Activated CD4-positive, alpha-beta T cell treated with anti-CD3 and anti-CD28 coated beads for 36 hours (primary cell): ENCODE measurements at regions of chr9 and their contacts with region 1.

Region 1: GRCh38 chr9:132249123-132249522 is 87.3 kb downstream of the NTNG2 start:
- DNase-seq: no peak
- ATAC-seq: no peak
- H3K4me3 Mint-ChIP-seq: no peak overlapping the region
- H3K27ac Mint-ChIP-seq: no peak overlapping the region
- H3K4me1 Mint-ChIP-seq: peaks cover 2% of the 10 kb centered on the region
- H3K27me3 Mint-ChIP-seq: peaks cover 2% of the 10 kb centered on the region

Region 2: DNA sequence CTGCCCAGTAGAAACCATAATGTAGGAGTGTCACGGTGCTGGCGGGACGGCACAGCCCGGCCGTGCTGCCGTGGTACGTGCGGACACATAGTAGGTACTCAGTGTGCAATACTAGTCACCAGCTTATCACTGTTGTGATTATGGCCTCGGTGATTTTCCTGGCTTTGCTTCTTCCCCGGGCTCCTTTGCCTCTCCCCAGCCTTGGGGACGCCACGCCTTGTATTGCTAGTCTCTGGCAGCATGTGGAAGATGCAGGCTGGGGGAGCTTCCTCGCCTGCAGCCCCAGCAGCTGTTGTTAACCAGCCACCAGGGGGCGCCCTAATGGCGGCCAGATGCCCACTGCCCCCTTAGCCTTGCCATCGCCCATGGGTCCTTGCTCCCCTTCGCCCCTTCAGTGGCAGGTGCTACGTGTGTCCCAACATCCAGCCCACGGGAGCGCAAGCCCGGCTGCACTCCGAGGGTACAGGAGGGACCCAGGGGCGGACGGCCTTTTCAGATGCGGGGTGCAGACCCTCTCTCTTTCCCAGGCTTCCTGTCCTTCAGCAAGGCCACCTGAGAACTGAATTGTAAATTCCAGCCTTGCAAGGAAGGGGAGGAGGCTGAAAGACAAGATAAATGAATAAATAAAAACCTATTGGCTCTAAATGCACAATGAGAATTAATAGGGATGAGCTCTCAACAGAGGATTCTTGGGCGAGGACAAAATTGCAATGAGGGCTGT is 79.3 kb before region 1 on chr9:
- CTCF ChIA-PET with region 1: interaction called, 11 read pairs
- POLR2A ChIA-PET with region 1: no interaction called
- intact Hi-C with region 1: loop called (anchors 1 kb)
- DNase-seq: peak; percentile 79
- ATAC-seq: peak; percentile 58
- H3K4me3 Mint-ChIP-seq: no peak overlapping the region
- H3K27ac Mint-ChIP-seq: no peak overlapping the region
- H3K4me1 Mint-ChIP-seq: no peaks in the 10 kb centered on the region
- H3K27me3 Mint-ChIP-seq: peaks cover 33% of the 10 kb centered on the region

Region 3: DNA sequence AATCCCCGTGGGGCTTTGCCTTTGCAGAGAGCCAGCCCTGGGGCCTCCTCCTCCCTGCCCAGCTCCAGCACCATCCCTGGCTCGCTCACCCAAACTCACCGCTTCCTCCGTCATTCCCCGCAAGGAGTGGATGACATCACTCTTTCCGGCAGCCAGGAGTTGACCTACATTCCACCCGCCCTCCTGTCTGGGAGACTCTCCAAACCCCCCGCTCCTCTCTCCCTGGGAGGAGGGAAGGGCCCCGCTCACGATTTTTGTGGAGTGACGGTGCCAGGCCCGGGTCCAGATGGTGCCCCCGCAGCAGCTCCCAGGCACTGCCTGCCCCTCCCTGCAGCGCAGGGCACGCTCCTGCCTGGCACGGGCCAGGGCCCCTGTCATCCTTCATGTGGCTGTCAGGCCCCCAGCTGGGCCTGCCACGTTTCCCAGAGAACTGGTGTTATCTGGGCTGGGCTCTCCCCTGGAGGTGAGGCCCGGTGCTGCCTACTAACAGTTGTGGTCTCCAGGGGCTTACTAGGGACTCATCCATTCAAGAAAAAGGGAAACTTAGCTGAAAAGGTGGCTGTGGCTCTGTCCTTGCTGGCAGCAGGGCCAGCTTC is 35.0 kb before region 1 on chr9:
- CTCF ChIA-PET with region 1: no interaction called
- POLR2A ChIA-PET with region 1: no interaction called
- intact Hi-C with region 1: no loop called
- DNase-seq: no peak
- ATAC-seq: no peak
- H3K4me3 Mint-ChIP-seq: no peak overlapping the region
- H3K27ac Mint-ChIP-seq: no peak overlapping the region
- H3K4me1 Mint-ChIP-seq: no peaks in the 10 kb centered on the region
- H3K27me3 Mint-ChIP-seq: peaks cover under 1% of the 10 kb centered on the region

Region 4: DNA sequence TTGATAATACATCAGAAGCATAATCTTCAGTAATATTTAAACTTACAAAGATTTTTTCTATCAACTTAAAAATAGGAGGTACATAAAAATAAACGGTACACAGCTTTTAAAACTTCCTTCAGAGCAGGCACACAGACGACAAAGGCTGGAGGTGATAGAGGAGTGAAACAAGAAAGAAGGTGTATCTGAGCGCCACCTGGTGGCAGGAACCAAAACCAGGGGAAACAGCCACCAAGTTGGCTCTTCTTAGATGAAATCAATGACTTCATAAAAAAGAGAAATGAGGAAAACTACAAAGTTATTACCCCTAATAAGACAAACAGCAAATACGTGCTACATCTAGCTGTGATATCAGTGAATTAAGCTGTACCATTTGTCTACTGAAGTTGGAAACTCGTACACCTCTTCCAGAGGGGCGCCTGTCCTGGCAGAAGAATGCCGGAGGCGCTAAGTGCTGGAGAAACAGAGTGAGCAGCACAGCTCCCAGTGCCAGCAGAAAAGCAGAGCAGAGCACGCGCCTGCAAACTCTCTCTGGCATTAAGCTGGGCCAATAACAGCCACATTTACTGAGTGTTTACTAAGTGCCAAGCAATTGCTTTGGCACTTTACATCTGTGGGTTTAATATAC is 19.7 kb after region 1 on chr9:
- CTCF ChIA-PET with region 1: interaction called, 19 read pairs
- POLR2A ChIA-PET with region 1: no interaction called
- intact Hi-C with region 1: no loop called
- DNase-seq: peak; percentile 87
- ATAC-seq: peak; percentile 80
- H3K4me3 Mint-ChIP-seq: no peak overlapping the region
- H3K27ac Mint-ChIP-seq: peak overlapping the region; percentile 67
- H3K4me1 Mint-ChIP-seq: peaks cover 17% of the 10 kb centered on the region
- H3K27me3 Mint-ChIP-seq: no peaks in the 10 kb centered on the region

Region 5: DNA sequence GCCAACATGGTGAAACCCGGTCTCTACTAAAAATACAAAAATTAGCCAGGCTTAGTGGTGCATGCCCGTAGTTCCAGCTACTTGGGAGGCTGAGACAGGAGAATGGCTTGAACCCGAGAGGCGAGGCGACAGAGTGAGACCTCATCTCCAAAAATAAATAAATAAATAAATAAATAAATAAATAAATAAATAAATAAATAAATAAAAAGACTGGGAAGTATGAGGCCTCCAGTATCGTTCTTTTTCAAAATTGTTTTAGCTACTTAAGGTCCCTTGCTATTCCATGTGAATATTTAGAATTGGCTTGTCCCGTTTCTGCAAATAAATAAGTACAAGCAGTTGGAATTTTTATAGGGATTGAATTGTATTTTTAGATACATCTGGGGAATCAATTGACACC is 108.6 kb after region 1 on chr9:
- CTCF ChIA-PET with region 1: no interaction called
- POLR2A ChIA-PET with region 1: no interaction called
- intact Hi-C with region 1: no loop called
- DNase-seq: no peak
- ATAC-seq: no peak
- H3K4me3 Mint-ChIP-seq: no peak overlapping the region
- H3K27ac Mint-ChIP-seq: no peak overlapping the region
- H3K4me1 Mint-ChIP-seq: peaks cover 12% of the 10 kb centered on the region
- H3K27me3 Mint-ChIP-seq: no peaks in the 10 kb centered on the region